ENCODE measurements at regions of chr1 and their contacts with region 1.

Region 1: GRCh38 chr1:78004719-78005447 is at the start of gene DNAJB4:
- DNase-seq: peak; percentile 69
- H3K4me3 Mint-ChIP-seq: peak within 1 kb of the TSS; percentile 90
- H3K27ac Mint-ChIP-seq: peak within 1 kb of the TSS; percentile 98
- H3K4me1 Mint-ChIP-seq: peaks cover 54% of the 10 kb centered on the region
- H3K27me3 Mint-ChIP-seq: peaks cover 3% of the 10 kb centered on the region
- total RNA-seq, gene DNAJB4: 10.2 and 10.3 TPM in 2 replicates

Region 2: GRCh38 chr1:77926561-77927357 is 78.1 kb before region 1 on chr1:
- intact Hi-C with region 1: loop called (anchors 2 kb)
- DNase-seq: no peak
- H3K4me3 Mint-ChIP-seq: peak overlapping the region; percentile 68
- H3K27ac Mint-ChIP-seq: peak overlapping the region; percentile 41
- H3K4me1 Mint-ChIP-seq: peaks cover 5% of the 10 kb centered on the region
- H3K27me3 Mint-ChIP-seq: peaks cover 1% of the 10 kb centered on the region

Region 3: GRCh38 chr1:78045926-78046778 is 41.3 kb after region 1 on chr1 and contains the start of gene GIPC2:
- intact Hi-C with region 1: loop called (anchors 1 kb)
- DNase-seq: peak; percentile 5
- H3K4me3 Mint-ChIP-seq: peak within 1 kb of the TSS; percentile 74
- H3K27ac Mint-ChIP-seq: no peak within 1 kb of the TSS
- H3K4me1 Mint-ChIP-seq: peaks cover 28% of the 10 kb centered on the region
- H3K27me3 Mint-ChIP-seq: peaks cover 54% of the 10 kb centered on the region
- total RNA-seq, gene GIPC2: 0.05 TPM in 1 of 2 replicates, not detected in the other

Region 4: GRCh38 chr1:78617615-78618026 is 612.7 kb after region 1 on chr1:
- intact Hi-C with region 1: loop called (anchors 10 kb)
- DNase-seq: peak; percentile 53
- H3K4me3 Mint-ChIP-seq: peak overlapping the region; percentile 51
- H3K27ac Mint-ChIP-seq: peak overlapping the region; percentile 30
- H3K4me1 Mint-ChIP-seq: peaks cover 42% of the 10 kb centered on the region
- H3K27me3 Mint-ChIP-seq: peaks cover 13% of the 10 kb centered on the region

Region 5: DNA sequence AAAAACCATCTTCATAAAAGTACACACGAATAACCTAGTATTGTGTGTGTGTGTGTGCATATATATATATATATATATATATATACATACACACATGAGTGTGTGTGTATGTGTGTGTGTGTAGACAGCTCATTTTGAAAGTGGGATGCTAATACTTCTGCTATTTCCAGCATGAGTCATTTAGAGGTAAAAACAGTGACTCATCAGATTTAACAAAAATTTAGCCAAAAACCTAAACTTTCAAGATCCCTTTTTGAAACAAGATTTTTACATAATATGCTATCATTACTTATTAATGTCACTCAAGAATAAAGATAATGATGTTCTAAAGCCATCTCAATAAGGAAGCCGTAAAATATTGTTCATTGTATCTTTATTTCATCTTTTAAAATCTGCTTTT is 1037.2 kb after region 1 on chr1:
- intact Hi-C with region 1: loop called (anchors 10 kb)
- DNase-seq: no peak
- H3K4me3 Mint-ChIP-seq: no peak overlapping the region
- H3K27ac Mint-ChIP-seq: no peak overlapping the region
- H3K4me1 Mint-ChIP-seq: peaks cover 16% of the 10 kb centered on the region
- H3K27me3 Mint-ChIP-seq: no peaks in the 10 kb centered on the region